ENCODE measurements at regions of chr18 and their contacts with region 1.

Region 1: DNA sequence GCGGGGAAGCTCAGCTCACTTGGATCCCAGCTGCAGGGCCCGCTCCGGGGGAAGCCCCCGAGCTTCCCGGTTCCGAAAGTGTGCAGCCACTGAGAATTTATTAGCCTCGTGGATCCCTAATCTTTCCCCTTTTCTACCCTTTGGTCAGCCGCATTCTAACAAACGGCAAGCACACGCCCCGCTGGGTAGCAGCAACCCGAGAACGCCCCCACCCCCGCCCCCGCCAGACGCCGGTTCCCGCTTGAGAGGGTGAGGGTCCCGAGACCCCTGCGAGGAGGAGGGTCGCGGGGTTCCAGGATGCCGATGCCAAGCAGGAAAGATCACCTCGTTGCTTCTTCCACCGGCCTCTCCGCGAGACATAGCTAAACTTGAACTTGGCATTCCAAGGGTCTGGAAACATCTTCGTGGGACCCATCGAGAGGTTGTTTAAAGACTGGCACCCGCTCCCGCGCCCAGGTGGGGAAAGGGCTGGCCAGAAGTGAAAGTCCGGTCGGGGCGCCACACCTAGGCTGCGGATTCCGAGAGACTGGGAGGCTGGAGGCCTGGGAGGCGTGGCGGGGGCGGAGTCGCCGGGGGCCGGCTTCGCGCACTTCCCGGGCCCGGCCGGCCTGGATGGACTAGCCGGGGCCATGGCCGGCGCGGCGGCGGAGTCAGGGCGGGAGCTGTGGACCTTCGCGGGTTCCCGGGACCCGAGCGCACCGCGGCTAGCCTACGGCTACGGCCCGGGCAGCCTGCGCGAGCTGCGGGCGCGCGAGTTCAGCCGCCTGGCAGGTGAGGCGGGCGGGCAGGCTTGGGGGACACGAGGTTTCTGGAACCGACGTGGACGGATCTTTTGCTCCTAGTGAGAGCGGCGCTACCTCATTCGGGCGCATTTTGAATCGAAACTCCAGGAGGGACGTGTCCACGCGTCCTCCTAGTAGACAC is at the start of gene MOCOS:
- DNase-seq: peak; percentile 43 to 50
- ATAC-seq: peak; percentile 74
- H3K4me3 ChIP-seq: peak within 1 kb of the TSS; percentile 66 to 83 (median 75)
- H3K27ac ChIP-seq: peak within 1 kb of the TSS in 3 of 4 donors; percentile 4 to 58 (median 24)
- H3K4me1 ChIP-seq: peaks cover 4 to 8% of the 10 kb centered on the region in 2 donors
- H3K27me3 ChIP-seq: peaks cover 5 to 19% (median 19%) of the 10 kb centered on the region in 3 donors
- CTCF ChIP-seq: no peak
- POLR2A ChIP-seq: peak in 1 of 2 donors; percentile 30
- total RNA-seq, gene MOCOS: 0.46 to 2.8 (median 0.73) TPM

Region 2: GRCh38 chr18:35605686-35606417 is 581.3 kb before region 1 on chr18:
- in situ Hi-C with region 1: no loop called
- intact Hi-C with region 1: no loop called
- DNase-seq: no peak
- ATAC-seq: no peak
- H3K4me3 ChIP-seq: no peak overlapping the region
- H3K27ac ChIP-seq: no peak overlapping the region
- H3K4me1 ChIP-seq: peaks cover 22 to 41% of the 10 kb centered on the region in 2 donors
- H3K27me3 ChIP-seq: no peaks in the 10 kb centered on the region
- CTCF ChIP-seq: no peak
- POLR2A ChIP-seq: no peak

Region 3: DNA sequence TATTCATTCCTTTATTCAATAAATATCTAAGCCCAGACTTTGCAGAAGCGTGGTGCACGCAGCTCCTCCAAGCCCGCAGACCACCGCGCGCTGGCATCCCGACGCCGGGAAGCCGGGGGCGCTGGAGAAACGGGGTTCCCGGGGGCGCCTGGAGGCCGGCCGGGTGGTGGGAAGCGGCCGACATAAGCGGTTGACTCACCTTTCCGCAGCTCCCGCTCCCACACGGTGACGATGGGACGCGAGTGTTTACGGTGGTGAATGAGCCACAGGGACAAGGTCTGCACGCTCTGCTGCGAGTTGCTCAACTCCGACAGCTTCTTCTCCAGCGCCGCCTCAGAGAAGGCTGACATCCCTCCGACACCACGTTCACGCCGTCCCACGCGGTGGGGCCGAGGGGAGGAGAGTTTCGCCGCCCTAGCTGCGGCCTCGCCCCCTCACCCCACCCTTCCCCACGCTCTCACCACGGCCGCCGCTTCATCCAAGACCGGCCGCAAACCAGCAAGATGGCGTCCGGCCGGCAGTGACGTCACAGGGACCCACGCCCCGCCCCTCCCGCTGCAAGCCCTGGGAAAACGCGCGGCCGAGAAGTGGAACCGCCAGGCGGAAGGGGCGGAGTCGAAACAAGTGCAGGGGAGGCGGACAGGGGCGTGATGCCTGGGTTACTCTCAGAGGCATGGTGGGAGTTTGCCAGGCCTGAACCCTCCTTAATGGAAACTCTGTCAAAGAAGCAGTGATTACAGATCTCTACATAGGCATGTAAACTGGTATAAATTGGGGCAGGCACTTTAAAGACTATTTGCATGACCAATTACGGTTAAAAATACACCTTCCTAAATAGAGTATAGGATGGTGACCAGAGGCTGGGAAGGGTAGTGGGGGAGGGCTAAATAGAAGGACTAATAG is 119.9 kb before region 1 on chr18 and contains the start of gene RPRD1A:
- in situ Hi-C with region 1: no loop called
- intact Hi-C with region 1: loop called (anchors 5 kb)
- DNase-seq: peak; percentile 89 to 93
- ATAC-seq: peak; percentile 97 to 99
- H3K4me3 ChIP-seq: peak within 1 kb of the TSS; percentile 73 to 93 (median 83)
- H3K27ac ChIP-seq: peak within 1 kb of the TSS; percentile 84 to 91 (median 88)
- H3K4me1 ChIP-seq: peaks cover 10 to 15% of the 10 kb centered on the region in 2 donors
- H3K27me3 ChIP-seq: no peaks in the 10 kb centered on the region
- CTCF ChIP-seq: peak in 1 of 5 experiments; percentile 9
- POLR2A ChIP-seq: peak; percentile 47 to 55
- total RNA-seq, gene RPRD1A: 59.6 to 63.8 (median 61.8) TPM

Region 4: DNA sequence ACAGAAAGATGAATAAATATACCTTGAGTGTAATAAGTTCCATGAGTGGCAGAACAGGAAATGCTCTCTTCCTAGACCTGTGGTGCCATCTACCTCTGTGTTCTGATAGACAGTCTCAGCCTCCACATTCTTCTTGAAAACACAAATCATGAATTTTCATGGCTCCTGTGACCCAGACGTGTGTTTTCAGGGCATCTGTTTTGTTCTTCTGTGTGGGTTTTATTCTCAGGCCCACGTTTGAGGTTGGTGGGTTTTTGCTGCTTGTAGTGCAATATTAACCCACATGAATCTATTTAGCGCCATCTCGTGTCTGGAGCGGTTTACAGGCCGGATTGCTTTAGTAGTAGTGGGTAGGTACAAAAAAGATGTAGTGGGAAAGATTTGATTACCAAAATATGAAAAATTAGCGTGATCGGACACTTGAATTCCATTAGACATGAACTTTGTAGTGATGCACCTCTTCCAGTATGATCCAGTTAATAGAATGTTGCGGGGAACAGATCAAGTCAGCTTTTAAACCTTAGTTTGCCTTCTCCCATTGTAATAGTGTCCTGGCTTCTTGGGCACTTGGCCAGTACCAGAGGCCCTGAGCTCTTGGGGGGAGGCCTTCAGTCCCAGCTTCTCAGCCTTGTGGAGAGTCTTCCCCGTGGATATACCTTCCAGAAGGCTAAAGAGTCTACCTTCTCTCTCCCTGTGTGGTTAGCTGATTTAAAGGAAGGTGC is 385.1 kb after region 1 on chr18:
- in situ Hi-C with region 1: no loop called
- intact Hi-C with region 1: loop called (anchors 5 kb)
- DNase-seq: peak in 1 of 2 donors; percentile 42
- ATAC-seq: peak; percentile 77 to 90
- H3K4me3 ChIP-seq: no peak overlapping the region
- H3K27ac ChIP-seq: no peak overlapping the region
- H3K4me1 ChIP-seq: peaks cover 0 to 6% of the 10 kb centered on the region in 2 donors
- H3K27me3 ChIP-seq: no peaks in the 10 kb centered on the region
- CTCF ChIP-seq: peak; percentile 25 to 56 (median 50)
- POLR2A ChIP-seq: no peak

Measured in gastrocnemius medialis (tissue), 4 donors.